CD4-positive, alpha-beta memory T cell (primary cell): ENCODE measurements at regions of chr20 and their contacts with region 1.

Region 1: DNA sequence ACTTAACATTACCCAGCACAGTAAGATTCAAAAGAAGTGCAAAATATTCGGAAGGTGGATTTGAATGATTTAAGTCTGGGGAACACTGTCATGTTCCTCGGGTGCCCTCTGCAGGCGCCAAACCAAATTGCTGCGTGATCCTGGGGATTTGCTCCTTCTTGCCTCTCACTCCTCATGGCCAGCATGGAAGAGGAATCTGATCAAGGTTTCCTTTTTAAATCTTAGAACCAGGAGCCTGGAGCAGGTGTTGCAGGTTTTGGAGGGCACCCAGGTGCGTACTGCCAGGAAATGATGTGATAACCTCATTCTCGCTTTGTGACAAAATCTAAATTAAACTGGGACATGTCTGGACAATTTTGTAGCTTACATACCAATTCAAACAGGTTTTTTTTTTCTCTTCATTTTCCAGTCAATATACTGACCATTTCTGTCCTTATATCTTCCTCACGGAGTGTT is 8.1 kb upstream of the PFDN4 start:
- DNase-seq: peak; percentile 53 to 62 (median 57)
- H3K4me3 ChIP-seq: no peak overlapping the region
- H3K4me3 Mint-ChIP-seq: no peak overlapping the region
- H3K27ac ChIP-seq: no peak overlapping the region
- H3K27ac Mint-ChIP-seq: no peak overlapping the region
- H3K4me1 ChIP-seq: no peaks in the 10 kb centered on the region
- H3K4me1 Mint-ChIP-seq: peaks cover 0 to 5% (median 0%) of the 10 kb centered on the region in 4 donors
- H3K27me3 ChIP-seq: no peaks in the 10 kb centered on the region
- H3K27me3 Mint-ChIP-seq: peaks cover 0 to 2% of the 10 kb centered on the region in 2 donors

Region 2: DNA sequence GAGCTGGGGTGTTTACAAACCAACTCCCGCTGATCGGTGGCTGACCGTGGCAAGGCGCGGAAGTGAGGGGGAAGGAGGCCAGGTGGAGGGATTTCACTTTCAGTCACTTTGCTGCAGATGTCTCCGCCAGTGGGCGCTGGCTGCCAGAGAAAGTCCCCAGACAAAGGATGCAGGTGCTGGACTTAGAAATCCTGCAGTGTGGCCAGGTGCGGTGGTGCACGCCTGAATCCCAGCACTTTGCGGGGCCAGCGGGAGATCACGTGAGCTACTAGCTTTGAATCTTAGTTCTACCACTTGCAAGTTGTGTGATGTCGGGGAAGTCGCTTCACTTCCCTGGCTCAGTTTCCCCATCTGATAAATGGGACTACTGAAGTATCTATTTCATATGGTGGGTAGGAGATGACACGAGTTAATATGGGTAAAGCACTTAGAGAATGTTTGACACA is 786.5 kb before region 1 on chr20:
- CTCF ChIA-PET with region 1: interaction called, 5 read pairs
- POLR2A ChIA-PET with region 1: no interaction called
- intact Hi-C with region 1: loop called (anchors 5 kb)
- DNase-seq: peak in 4 of 5 donors; percentile 30 to 42 (median 37)
- H3K4me3 ChIP-seq: no peak overlapping the region
- H3K4me3 Mint-ChIP-seq: peak overlapping the region in 4 of 8 donors; percentile 29 to 73 (median 52)
- H3K27ac ChIP-seq: no peak overlapping the region
- H3K27ac Mint-ChIP-seq: peak overlapping the region in 3 of 7 donors; percentile 31 to 57 (median 36)
- H3K4me1 ChIP-seq: peaks cover 3% of the 10 kb centered on the region
- H3K4me1 Mint-ChIP-seq: peaks cover 0 to 6% (median 3%) of the 10 kb centered on the region in 4 donors
- H3K27me3 ChIP-seq: no peaks in the 10 kb centered on the region
- H3K27me3 Mint-ChIP-seq: peaks cover 0 to 1% of the 10 kb centered on the region in 2 donors

Region 3: DNA sequence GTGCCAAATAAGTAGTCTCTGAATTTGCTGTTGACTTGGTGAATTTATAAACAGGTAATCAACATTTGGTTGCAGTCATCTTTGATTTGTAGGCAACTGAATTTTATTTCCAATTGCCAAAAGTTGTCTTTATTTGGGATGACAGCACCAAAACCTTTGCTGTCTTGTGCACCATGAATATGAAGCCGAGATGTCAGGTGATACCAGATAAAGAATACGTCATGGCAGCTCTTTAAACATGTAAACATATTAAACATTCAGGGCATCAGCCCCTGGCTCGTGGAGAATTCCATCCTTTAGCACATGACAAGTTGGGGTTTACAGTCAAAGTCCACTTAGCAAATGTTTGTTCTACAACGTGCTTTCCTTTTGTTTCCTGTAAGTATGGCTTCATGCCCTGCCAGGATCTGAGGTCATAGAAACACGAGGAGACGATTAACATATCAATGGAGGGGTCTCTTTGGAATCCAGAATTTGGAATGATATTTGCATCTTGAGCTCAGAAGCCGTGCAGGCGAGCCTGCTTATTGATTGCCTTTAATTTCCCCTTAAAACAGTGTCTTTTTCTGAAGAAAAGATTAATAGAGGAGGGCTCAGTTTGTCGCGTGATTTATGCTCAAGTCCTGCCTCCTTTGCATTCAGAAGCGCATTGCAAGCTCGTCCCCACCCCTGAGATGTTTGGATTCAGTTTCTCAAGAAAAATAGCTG is 435.9 kb before region 1 on chr20:
- CTCF ChIA-PET with region 1: no interaction called
- POLR2A ChIA-PET with region 1: no interaction called
- intact Hi-C with region 1: no loop called
- DNase-seq: no peak
- H3K4me3 ChIP-seq: no peak overlapping the region
- H3K4me3 Mint-ChIP-seq: no peak overlapping the region
- H3K27ac ChIP-seq: no peak overlapping the region
- H3K27ac Mint-ChIP-seq: no peak overlapping the region
- H3K4me1 ChIP-seq: no peaks in the 10 kb centered on the region
- H3K4me1 Mint-ChIP-seq: peaks cover 0 to 9% (median 3%) of the 10 kb centered on the region in 4 donors
- H3K27me3 ChIP-seq: no peaks in the 10 kb centered on the region
- H3K27me3 Mint-ChIP-seq: no peaks in the 10 kb centered on the region

Region 4: DNA sequence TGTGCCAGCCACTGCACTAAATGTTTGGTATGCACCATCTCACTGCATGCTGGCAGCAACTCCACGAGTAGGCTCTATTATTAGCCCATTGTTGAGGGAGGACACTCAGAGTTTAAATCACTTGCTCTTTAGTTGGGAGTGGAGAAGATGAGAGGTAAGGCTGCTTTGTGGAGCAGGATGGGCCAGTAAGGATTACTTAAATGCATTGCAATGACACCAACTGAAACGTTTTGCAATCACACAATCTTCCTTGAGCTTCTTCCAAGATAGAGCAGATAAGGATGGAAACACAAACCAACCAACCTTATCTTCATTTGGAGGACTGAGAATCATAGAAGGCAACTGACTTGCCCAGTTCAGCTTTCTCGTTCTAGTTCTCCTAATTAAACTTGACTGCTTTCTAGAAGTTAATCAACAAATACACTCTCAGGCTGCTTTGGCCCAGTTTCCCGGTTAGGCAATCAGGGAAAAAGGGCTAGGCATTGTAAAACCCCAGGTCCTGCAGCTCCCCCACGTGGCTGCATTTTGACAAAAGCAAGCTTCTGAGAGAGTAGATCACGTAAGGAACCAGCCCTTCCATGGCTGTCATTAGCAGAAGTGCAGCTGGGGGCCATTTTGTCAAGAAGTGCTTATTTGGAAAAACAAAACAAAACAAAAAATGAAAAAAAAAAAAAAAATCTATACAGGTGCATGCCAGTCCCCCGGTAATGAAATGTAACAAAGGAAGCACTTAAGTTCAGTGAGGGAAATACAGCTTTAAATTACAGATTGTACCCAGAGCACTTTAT is 260.0 kb before region 1 on chr20:
- CTCF ChIA-PET with region 1: interaction called, 3 read pairs
- POLR2A ChIA-PET with region 1: no interaction called
- intact Hi-C with region 1: loop called (anchors 10 kb)
- DNase-seq: peak; percentile 50 to 60 (median 52)
- H3K4me3 ChIP-seq: no peak overlapping the region
- H3K4me3 Mint-ChIP-seq: no peak overlapping the region
- H3K27ac ChIP-seq: no peak overlapping the region
- H3K27ac Mint-ChIP-seq: peak overlapping the region in 3 of 7 donors; percentile 3 to 77 (median 18)
- H3K4me1 ChIP-seq: peaks cover 21% of the 10 kb centered on the region
- H3K4me1 Mint-ChIP-seq: peaks cover 14 to 43% (median 24%) of the 10 kb centered on the region in 4 donors
- H3K27me3 ChIP-seq: no peaks in the 10 kb centered on the region
- H3K27me3 Mint-ChIP-seq: no peaks in the 10 kb centered on the region

Region 5: DNA sequence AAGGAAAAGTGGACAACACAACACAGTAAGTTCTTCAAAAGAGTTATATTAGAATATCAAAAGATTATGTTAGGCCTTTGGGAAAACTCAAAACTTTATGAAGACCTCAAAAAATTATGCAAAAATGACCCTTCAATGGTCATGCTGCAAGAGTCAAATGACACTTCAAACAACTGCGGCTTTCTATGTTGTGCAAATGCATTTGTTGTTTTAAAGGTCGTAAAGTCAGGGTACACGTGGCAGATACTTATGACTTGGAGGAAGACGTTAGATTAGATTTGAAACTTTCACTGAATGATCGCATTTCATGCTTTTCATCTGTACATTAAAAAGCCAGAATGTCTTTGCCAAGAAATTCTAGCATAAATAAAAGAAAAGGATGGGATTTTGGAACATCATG is 160.8 kb before region 1 on chr20:
- CTCF ChIA-PET with region 1: no interaction called
- POLR2A ChIA-PET with region 1: no interaction called
- intact Hi-C with region 1: no loop called
- DNase-seq: no peak
- H3K4me3 ChIP-seq: no peak overlapping the region
- H3K4me3 Mint-ChIP-seq: no peak overlapping the region
- H3K27ac ChIP-seq: no peak overlapping the region
- H3K27ac Mint-ChIP-seq: no peak overlapping the region
- H3K4me1 ChIP-seq: no peaks in the 10 kb centered on the region
- H3K4me1 Mint-ChIP-seq: no peaks in the 10 kb centered on the region
- H3K27me3 ChIP-seq: no peaks in the 10 kb centered on the region
- H3K27me3 Mint-ChIP-seq: peaks cover 8 to 9% of the 10 kb centered on the region in 2 donors

Region 6: DNA sequence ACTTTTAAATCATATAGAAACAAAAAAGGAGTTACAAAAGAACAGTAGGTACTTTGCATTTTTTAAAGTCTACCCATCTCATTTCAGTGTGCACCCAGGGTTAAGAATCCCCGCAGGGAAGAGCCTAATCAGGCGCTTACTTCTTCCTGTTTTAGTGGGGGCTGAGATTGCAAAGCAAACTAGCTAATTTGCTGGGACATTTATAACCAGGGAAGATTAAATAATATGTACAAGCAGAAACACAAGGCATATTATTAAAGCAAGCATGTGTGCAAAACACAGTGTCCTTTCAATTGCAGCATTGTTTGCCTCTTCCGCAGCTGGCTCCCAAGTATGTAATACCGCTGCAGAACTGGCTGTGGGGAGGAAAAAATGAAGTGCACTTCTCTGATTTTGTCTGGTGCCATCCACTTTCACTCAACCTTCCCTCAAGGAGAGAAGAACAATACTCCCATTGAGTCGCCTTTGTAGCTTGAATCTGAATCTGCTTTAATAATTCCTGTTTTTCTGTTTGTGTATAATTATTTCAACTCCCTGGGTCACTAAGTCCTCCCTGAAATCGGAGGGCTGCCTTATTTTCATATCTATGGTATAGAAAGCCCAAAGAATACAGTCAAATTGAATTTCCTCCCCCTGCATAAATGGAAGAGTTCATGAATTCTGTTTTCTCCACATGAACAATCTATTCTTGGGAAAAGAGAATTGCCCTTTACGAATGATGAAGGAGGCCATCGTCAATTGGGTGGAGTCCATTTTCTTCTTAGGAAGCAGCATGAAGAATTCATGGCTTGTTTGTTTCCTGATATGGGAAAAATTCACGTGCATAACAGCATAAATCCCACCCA is 106.1 kb before region 1 on chr20:
- CTCF ChIA-PET with region 1: interaction called, 26 read pairs
- POLR2A ChIA-PET with region 1: no interaction called
- intact Hi-C with region 1: loop called (anchors 1 kb)
- DNase-seq: no peak
- H3K4me3 ChIP-seq: no peak overlapping the region
- H3K4me3 Mint-ChIP-seq: no peak overlapping the region
- H3K27ac ChIP-seq: no peak overlapping the region
- H3K27ac Mint-ChIP-seq: no peak overlapping the region
- H3K4me1 ChIP-seq: no peaks in the 10 kb centered on the region
- H3K4me1 Mint-ChIP-seq: peaks cover 0 to 5% (median 1%) of the 10 kb centered on the region in 4 donors
- H3K27me3 ChIP-seq: no peaks in the 10 kb centered on the region
- H3K27me3 Mint-ChIP-seq: peaks cover 5 to 7% of the 10 kb centered on the region in 2 donors

Region 7: GRCh38 chr20:54103067-54103761 is 96.5 kb before region 1 on chr20:
- CTCF ChIA-PET with region 1: interaction called, 26 read pairs
- POLR2A ChIA-PET with region 1: no interaction called
- intact Hi-C with region 1: no loop called
- DNase-seq: peak; percentile 38 to 64 (median 51)
- H3K4me3 ChIP-seq: no peak overlapping the region
- H3K4me3 Mint-ChIP-seq: no peak overlapping the region
- H3K27ac ChIP-seq: no peak overlapping the region
- H3K27ac Mint-ChIP-seq: no peak overlapping the region
- H3K4me1 ChIP-seq: no peaks in the 10 kb centered on the region
- H3K4me1 Mint-ChIP-seq: peaks cover 0 to 2% (median under 1%) of the 10 kb centered on the region in 4 donors
- H3K27me3 ChIP-seq: no peaks in the 10 kb centered on the region
- H3K27me3 Mint-ChIP-seq: peaks cover 2 to 3% of the 10 kb centered on the region in 2 donors

Region 8: DNA sequence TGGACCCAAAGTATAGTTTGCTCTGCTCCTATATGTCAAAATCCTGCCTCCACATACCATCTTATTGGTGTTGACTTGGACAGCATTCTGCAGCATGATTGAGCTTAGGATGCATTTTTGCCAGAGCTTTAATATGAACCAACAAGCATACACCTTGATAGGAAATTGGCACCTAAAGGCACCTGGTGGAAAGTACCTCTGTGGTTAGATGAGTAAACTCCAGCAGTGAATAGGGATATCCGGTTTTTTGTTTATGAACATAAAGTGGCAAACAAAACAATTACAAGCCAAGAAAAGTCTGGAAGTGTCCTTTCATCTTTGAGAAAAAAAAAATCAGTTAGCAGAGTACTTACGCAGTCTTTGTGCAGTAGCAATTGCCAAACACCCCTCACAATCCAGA is 19.8 kb before region 1 on chr20:
- CTCF ChIA-PET with region 1: interaction called, 12 read pairs
- POLR2A ChIA-PET with region 1: no interaction called
- intact Hi-C with region 1: no loop called
- DNase-seq: peak in 1 of 5 donors; percentile 11
- H3K4me3 ChIP-seq: no peak overlapping the region
- H3K4me3 Mint-ChIP-seq: no peak overlapping the region
- H3K27ac ChIP-seq: no peak overlapping the region
- H3K27ac Mint-ChIP-seq: peak overlapping the region in 1 of 7 donors; percentile 8
- H3K4me1 ChIP-seq: no peaks in the 10 kb centered on the region
- H3K4me1 Mint-ChIP-seq: peaks cover 0 to 9% (median 7%) of the 10 kb centered on the region in 4 donors
- H3K27me3 ChIP-seq: peaks cover 7% of the 10 kb centered on the region
- H3K27me3 Mint-ChIP-seq: peaks cover 17 to 22% of the 10 kb centered on the region in 2 donors